ENCODE measurements at regions of chr11 and their contacts with region 1.

Region 1: GRCh38 chr11:1447845-1448825 is 38.4 kb downstream of the MOB2 start:
- DNase-seq: no peak
- ATAC-seq: no peak
- H3K4me3 ChIP-seq: no peak overlapping the region
- H3K27ac ChIP-seq: no peak overlapping the region
- H3K4me1 ChIP-seq: peaks cover 0 to 7% (median 3%) of the 10 kb centered on the region in 12 donors
- H3K27me3 ChIP-seq: peaks cover 0 to 9% (median 0%) of the 10 kb centered on the region in 9 donors
- CTCF ChIP-seq: no peak
- POLR2A ChIP-seq: no peak

Region 2: GRCh38 chr11:1341928-1342524 is 106.1 kb before region 1 on chr11:
- intact Hi-C with region 1: no loop called
- DNase-seq: peak in 1 of 5 donors; percentile 56
- ATAC-seq: peak in 3 of 4 donors; percentile 70 to 84 (median 81)
- H3K4me3 ChIP-seq: no peak overlapping the region
- H3K27ac ChIP-seq: peak overlapping the region in 3 of 12 donors; percentile 13 to 33 (median 33)
- H3K4me1 ChIP-seq: peaks cover 0 to 13% (median 0%) of the 10 kb centered on the region in 12 donors
- H3K27me3 ChIP-seq: no peaks in the 10 kb centered on the region
- CTCF ChIP-seq: peak in 2 of 12 donors; percentile 4 to 6
- POLR2A ChIP-seq: no peak

Region 3: GRCh38 chr11:1397129-1397861 is 50.8 kb before region 1 on chr11:
- intact Hi-C with region 1: loop called in 1 of 10 experiments (anchors 5 kb)
- DNase-seq: peak in 1 of 5 donors; percentile 32
- ATAC-seq: no peak
- H3K4me3 ChIP-seq: no peak overlapping the region
- H3K27ac ChIP-seq: no peak overlapping the region
- H3K4me1 ChIP-seq: no peaks in the 10 kb centered on the region
- H3K27me3 ChIP-seq: peaks cover 0 to 47% (median 7%) of the 10 kb centered on the region in 9 donors
- CTCF ChIP-seq: no peak
- POLR2A ChIP-seq: no peak

Region 4: GRCh38 chr11:1460396-1460985 is 12.4 kb after region 1 on chr11:
- intact Hi-C with region 1: no loop called
- DNase-seq: peak in 1 of 5 donors; percentile 57
- ATAC-seq: peak in 1 of 4 donors; percentile 9
- H3K4me3 ChIP-seq: peak overlapping the region in 1 of 12 donors; percentile 16
- H3K27ac ChIP-seq: peak overlapping the region in 4 of 12 donors; percentile 13 to 93 (median 38)
- H3K4me1 ChIP-seq: peaks cover 0 to 16% (median 3%) of the 10 kb centered on the region in 12 donors
- H3K27me3 ChIP-seq: no peaks in the 10 kb centered on the region
- CTCF ChIP-seq: no peak
- POLR2A ChIP-seq: no peak

Measured in heart left ventricle (tissue), 16 donors.